ENCODE measurements at regions of chr2 and their contacts with region 1.

Region 1: GRCh38 chr2:148644883-148645538 is 460 bp downstream of the EPC2 start:
- DNase-seq: peak; percentile 98
- H3K4me3 Mint-ChIP-seq: peak overlapping the region; percentile 86
- H3K27ac Mint-ChIP-seq: peak overlapping the region; percentile 98
- H3K4me1 Mint-ChIP-seq: peaks cover 31% of the 10 kb centered on the region
- H3K27me3 Mint-ChIP-seq: peaks cover 14% of the 10 kb centered on the region

Region 2: GRCh38 chr2:147937744-147938349 is 707.2 kb before region 1 on chr2:
- intact Hi-C with region 1: loop called (anchors 10 kb)
- DNase-seq: no peak
- H3K4me3 Mint-ChIP-seq: no peak overlapping the region
- H3K27ac Mint-ChIP-seq: no peak overlapping the region
- H3K4me1 Mint-ChIP-seq: peaks cover 2% of the 10 kb centered on the region
- H3K27me3 Mint-ChIP-seq: no peaks in the 10 kb centered on the region

Region 3: DNA sequence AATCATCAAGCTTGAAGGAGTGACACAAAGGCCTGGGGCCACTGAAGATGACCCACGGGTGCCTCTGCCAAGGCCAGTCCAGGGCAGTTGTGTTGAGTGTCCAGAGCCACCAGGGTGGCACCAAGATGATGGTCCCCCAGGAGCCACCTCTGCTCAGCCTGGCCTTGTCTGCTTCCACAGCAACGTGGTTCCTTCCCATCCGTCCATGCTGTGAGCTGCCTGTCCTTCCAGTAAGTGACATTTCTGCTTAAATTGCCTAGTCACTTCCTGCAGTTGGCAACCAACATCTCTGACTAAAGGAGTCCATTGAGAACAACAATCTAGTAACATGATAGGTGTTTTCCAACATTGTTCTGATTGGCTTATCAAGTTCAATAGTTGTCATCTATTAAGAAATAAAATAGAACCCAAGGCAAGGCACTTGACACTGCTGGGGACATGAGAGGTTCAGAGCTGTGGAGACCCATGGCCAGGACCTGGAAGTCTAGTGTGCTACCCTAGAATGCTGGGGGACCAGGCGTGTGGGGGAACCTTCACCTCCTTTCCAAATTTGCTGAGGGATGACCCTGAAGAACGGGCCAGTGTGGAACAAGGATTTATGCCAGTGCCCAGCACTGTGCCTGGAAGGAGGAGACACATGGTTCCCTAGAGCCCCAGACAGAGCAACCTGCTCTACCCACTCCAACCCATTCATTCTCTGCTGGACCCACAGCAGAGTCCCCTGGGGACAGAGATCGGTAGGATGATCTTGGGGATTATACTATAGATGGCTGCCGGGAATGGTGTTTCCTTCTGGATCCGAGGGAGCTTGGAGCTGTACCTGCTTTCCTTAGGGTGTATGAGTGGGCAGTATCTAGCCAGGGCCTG is 99.4 kb before region 1 on chr2:
- intact Hi-C with region 1: loop called (anchors 1 kb)
- DNase-seq: peak; percentile 83
- H3K4me3 Mint-ChIP-seq: peak overlapping the region; percentile 36
- H3K27ac Mint-ChIP-seq: peak overlapping the region; percentile 87
- H3K4me1 Mint-ChIP-seq: peaks cover 47% of the 10 kb centered on the region
- H3K27me3 Mint-ChIP-seq: no peaks in the 10 kb centered on the region

Region 4: DNA sequence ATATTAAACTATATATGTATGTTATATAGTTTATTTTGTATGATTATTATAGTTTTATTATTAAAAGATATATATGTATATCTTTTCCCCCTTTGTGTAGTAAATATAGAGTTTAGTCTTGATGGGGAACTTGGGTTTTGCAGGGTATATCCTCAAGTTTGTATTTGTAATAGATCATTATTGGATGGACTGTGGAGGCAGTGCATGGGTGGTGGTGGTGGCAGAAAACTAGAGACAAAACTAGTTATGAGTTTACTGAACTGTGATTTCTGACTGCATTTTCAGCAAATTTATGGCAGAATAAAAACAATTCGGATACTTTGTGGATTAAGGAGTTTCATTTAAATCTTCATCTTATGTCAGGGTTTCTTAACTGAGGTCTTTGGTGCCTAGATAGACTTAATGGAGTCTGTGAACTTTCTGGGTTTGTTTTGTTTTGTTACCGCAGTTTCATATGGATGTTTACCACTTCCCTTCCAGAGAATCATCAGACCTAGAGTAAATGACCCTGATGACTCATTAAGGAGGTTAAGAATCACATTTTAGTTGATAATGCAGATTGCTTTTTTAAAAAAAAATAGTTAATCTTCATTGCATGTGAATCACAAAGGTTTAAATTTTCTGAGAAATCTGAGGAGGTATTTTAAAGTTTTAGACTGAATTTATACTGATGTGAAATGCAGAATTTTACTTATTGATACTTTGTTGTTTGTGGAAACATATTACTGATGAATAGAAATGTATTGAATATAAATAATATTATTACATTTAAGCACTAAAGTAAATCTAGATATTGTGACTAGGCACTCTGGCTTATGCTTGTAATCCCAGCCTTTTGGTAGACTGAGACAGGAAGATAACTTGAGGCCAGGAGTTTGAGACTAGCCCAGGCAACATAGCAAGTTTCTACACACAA is 14.1 kb after region 1 on chr2:
- intact Hi-C with region 1: loop called (anchors 1 kb)
- DNase-seq: peak; percentile 71
- H3K4me3 Mint-ChIP-seq: peak overlapping the region; percentile 65
- H3K27ac Mint-ChIP-seq: peak overlapping the region; percentile 87
- H3K4me1 Mint-ChIP-seq: peaks cover 45% of the 10 kb centered on the region
- H3K27me3 Mint-ChIP-seq: no peaks in the 10 kb centered on the region

Region 5: GRCh38 chr2:148874868-148875341 is 229.9 kb after region 1 on chr2 and contains the start of gene KIF5C:
- intact Hi-C with region 1: loop called (anchors 1 kb)
- DNase-seq: peak; percentile 94
- H3K4me3 Mint-ChIP-seq: peak within 1 kb of the TSS; percentile 91
- H3K27ac Mint-ChIP-seq: peak within 1 kb of the TSS; percentile 86
- H3K4me1 Mint-ChIP-seq: peaks cover 14% of the 10 kb centered on the region
- H3K27me3 Mint-ChIP-seq: peaks cover 26% of the 10 kb centered on the region
- total RNA-seq, gene KIF5C: 16.9 and 20.0 TPM in 2 replicates

Measured in activated CD4-positive, alpha-beta T cell treated with anti-CD3 and anti-CD28 coated beads, Interleukin-2, amount 10 ng/mL, durations not matched to agents 24 days and 14 days (primary cell).